ENCODE measurements at regions of chr1 and their contacts with region 1.

Region 1: DNA sequence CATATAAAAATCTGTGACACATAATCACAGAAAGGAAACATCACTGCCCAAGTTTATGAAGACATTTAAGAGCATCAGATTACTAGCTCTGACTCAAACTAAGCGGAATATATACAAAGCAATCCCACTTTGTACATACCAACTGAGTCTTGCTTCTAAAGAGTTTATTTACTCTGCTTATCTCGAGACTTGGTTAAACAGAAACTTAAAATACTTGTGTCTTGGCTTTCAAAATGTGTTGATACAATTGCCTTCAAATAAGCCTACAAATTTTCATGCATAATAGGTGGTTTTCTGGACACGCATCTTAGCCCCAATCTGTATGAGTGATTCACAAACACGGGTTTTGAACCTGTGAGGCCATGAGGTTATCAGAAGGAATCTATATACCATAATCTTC is 21.0 kb downstream of the CD160 start:
- DNase-seq: no peak
- H3K4me3 ChIP-seq: no peak overlapping the region
- H3K27ac ChIP-seq: no peak overlapping the region
- H3K4me1 ChIP-seq: peaks cover 5% of the 10 kb centered on the region
- H3K27me3 ChIP-seq: no peaks in the 10 kb centered on the region
- CTCF ChIP-seq: no peak
- POLR2A ChIP-seq: no peak

Region 2: DNA sequence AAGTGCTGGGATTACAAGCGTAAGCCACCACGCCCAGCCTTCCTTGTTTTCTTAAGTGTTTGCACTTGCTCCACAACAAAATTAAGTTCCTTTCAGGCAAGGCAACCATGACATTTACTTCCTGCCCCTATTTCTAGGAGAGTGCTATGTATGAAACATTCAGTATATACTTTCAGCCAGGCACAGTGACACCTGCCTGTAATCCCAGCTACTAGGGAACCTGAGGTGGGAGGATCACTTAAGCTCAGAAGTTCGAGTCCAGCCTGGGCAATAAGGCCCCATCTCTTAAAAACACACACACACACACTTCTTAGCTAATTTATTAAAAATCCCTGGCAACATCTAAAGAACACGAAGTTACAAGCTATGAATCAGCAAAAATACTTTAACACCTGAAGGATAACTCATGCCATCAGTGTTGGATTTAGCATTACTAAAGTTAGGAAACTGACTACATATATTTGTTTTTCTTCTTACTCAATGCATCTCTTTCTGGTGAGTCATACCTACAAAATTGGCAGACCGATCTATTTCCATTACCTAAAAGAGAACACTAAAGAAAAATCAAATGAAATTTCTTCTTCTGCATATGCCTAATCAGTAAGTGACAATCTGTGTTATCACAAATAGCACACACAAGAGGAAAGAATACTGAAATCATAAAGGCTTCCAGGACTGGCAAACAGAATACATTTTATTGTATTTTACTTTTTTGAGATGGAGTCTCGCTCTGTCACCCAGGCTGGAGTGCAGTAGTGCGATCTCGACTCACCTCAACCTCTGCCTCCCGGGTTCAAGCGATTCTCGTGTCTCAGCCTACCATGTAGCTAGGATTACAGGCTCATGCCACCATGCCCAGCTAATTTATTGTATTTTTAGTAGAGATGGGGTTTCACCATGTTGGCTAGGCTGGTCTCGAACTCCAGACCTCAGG is 42.2 kb after region 1 on chr1:
- CTCF ChIA-PET with region 1: interaction called, 3 read pairs
- POLR2A ChIA-PET with region 1: no interaction called
- dilution Hi-C with region 1: no loop called
- intact Hi-C with region 1: loop called (anchors 5 kb)
- DNase-seq: peak; percentile 96
- H3K4me3 ChIP-seq: no peak overlapping the region
- H3K27ac ChIP-seq: peak overlapping the region; percentile 91
- H3K4me1 ChIP-seq: peaks cover 52% of the 10 kb centered on the region
- H3K27me3 ChIP-seq: no peaks in the 10 kb centered on the region
- CTCF ChIP-seq: no peak
- POLR2A ChIP-seq: no peak